ENCODE measurements at regions of chr19 and their contacts with region 1.

Region 1: DNA sequence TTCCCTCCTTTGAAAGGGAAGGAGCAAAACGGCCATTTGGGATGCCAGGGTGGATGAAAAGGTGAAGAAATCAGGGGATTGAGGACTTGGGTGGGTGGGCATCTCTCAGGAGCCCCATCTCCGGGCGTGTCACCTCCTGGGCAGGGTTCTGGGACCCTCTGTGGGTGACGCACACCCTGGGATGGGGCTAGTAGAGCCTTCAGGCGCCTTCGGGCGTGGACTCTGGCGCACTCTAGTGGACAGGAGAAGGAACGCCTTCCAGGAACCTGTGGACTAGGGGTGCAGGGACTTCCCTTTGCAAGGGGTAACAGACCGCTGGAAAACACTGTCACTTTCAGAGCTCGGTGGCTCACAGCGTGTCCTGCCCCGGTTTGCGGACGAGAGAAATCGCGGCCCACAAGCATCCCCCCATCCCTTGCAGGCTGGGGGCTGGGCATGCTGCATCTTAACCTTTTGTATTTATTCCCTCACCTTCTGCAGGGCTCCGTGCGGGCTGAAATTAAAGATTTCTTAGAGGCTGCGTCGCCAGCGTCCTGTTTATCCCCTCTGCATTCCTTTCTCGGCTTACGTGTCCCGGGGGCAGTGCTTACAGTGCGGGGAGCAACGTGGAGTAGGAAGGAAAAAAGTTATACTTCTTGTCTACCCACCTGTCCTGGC is 15.2 kb upstream of the S1PR4 start:
- DNase-seq: peak; percentile 37 to 94 (median 68)

Region 2: DNA sequence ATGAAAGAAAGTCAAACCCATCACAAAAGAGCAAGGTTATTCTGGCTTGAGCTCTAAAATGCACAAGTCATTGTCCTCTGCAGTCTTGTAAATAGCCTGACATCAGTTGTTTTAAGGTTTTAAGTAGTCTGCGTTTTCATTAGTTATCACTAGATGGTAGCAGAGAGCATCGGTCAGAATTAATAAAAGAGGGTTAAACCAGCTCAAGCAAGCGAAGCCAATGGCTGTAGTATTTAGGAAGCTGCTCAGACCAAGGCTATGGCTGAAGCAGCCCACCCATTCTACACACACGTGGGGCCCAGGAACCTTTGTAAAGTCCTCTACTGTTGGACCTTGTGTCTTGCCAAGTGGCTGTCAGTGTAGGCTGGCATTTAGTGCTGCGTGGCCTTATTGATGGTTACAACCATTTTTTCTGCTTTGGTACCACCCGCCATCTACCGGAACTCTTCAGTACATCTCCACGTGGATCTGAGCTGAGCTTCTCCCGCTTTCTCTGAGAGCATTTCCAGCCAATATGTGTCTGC is 275.9 kb before region 1 on chr19:
- intact Hi-C with region 1: loop called (anchors 5 kb)
- DNase-seq: peak in 3 of 10 donors; percentile 23 to 53 (median 23)

Region 3: DNA sequence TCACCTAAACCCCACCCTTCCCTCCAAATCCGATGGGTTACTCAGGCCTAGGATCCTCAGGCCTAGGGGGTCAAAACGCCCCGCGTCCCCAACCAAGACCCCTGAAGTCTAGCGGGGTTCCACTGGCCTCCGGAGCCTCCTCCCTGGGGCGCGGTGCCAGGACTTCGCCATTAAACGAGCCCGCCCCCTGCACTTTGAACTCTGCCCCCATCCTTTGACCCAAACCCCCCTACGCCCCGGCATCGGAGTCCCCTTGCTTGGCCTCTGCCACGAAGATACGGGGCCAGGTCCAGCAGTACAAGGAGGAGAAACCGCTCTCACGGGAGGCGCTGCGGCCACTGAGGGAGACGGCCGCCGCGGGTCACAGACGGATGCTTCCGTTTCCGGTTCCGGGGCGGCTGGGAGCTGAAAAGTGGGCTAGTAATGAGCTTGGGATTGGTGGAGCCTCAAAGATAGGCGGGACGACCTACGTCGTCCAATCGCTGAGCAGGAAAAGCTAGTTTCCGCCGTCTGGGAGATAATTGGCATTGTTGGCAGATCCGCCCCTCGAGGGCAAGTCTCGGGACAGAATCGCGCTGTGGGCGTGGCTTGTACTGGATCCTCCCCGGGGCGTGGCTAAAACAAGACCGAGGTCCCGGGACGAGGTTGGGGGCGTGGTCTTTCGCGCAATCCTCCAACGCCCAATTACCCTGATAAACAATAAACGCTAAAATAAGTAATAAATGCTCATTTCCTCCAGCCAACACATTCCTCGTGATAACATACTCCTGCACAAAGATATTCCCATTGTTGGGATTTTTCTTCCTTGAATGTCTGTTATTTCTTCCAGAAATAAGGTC is 212.9 kb before region 1 on chr19:
- intact Hi-C with region 1: loop called (anchors 5 kb)
- DNase-seq: peak; percentile 99 to 100 (median 100)

Region 4: GRCh38 chr19:3075895-3076431 is 87.4 kb before region 1 on chr19:
- intact Hi-C with region 1: loop called (anchors 10 kb)
- DNase-seq: peak in 9 of 10 donors; percentile 33 to 91 (median 60)

Region 5: GRCh38 chr19:3302755-3303154 is 139.4 kb after region 1 on chr19:
- intact Hi-C with region 1: no loop called
- DNase-seq: peak in 3 of 10 donors; percentile 8 to 45 (median 9)